ENCODE measurements at regions of chr15 and their contacts with region 1.

Region 1: DNA sequence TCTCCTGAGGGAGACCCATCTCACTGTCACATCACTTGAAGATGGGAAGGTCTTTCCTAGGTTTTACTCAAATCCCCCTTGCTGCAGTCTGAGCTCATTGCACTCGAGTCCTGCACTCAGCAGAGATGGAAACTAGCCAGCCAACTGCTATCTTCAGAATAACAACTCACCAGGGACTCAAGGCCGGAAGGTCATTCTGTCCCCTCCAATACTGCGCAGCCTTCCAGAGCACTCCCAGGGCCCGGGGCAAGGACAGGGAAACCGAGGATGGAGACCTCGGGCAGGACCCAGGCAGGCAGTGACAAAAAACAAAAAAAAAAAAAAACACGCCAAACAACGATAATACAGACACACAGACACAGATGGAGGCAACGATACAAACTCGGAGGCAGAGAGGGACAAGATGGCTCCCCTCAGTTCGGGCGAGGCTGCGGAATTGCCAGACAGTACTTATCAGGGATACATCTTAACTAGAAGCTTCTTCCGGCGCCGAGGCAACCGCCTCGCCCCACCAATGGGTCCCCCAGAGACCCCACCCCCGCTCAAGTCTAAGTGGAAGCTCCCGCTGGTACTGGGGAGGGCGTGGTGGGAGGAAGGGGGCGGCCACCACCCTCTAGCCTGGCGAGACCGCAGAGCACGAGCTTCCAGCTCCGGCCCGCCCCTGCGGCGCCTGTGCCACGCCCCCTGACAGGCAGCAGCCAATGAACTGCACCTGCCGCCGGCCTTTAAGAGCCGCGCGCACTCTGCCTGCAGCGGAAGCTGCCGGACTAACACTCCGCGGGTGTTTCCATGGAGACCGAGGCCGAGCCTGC is 7.0 kb upstream of the MAP1A start:
- DNase-seq: peak; percentile 97 to 100 (median 99)
- H3K4me3 ChIP-seq: peak overlapping the region; percentile 47 to 98 (median 81)
- H3K27ac ChIP-seq: peak overlapping the region; percentile 82 to 99 (median 97)
- H3K27me3 ChIP-seq: no peaks in the 10 kb centered on the region
- CTCF ChIP-seq: peak in 46 of 56 donors; percentile 11 to 55 (median 30)

Region 2: DNA sequence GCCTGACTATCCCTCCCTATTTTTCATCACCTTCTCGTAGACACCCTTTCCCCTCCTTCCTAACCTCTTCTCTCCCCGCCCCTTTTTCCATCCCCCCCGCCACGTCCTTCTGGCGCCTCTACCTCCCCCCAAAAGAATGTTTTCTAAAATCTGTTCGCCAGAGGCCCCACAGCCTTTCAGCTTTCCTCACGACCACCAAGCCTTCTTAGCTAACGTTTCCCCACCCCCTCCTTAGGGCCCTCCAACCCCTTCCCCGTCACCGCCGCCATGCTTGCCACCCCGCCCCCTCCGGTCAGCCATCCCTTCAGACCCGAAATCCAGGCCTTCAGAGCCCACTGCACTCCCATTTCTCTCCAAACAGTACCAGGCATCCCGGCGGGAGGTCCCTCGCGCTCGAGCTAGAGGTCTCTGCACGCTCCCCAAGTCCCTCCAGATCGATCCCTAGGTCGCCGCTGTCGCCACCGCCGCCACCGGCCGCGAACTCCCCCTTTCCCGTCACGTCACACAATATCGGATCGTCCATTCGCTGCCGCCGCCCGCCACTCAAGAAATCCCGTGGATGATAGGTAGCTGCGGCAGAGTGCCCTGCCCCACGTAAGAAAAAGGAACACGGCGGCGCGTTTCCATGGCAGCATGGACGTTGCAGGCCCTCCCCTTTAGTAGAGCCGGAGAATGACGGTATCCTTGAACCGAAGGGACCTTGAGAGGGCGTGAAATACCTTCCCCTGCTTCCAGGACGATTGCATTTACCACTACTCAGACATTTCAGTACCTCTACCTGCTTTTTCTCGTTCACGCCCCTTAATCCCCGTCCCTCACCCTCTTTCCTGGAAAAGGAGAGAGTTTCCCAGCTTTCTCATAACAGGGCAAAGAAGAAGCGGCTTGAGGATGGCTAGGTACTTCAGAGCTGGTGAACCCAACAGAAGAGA is 17.5 kb before region 1 on chr15 and contains the start of gene TP53BP1:
- intact Hi-C with region 1: loop called in 1 of 2 experiments (anchors 2 kb)
- DNase-seq: peak; percentile 96 to 98 (median 98)
- H3K4me3 ChIP-seq: peak within 1 kb of the TSS; percentile 67 to 93 (median 83)
- H3K27ac ChIP-seq: peak within 1 kb of the TSS in 55 of 59 donors; percentile 25 to 92 (median 78)
- H3K27me3 ChIP-seq: no peaks in the 10 kb centered on the region
- CTCF ChIP-seq: peak in 20 of 56 donors; percentile 8 to 40 (median 20)
- total RNA-seq, gene TP53BP1: 71.0 to 120 (median 97.6) TPM